Activated CD8-positive, alpha-beta T cell treated with anti-CD3 and anti-CD28 coated beads, Interleukin-2, amount 10 ng/mL, durations not matched to agents 7 days and 5 days (primary cell): ENCODE measurements at regions of chr17 and their contacts with region 1.

Region 1: GRCh38 chr17:8965394-8966168 is at the start of gene PIK3R5:
- DNase-seq: peak; percentile 86
- ATAC-seq: peak; percentile 81
- H3K4me3 Mint-ChIP-seq: peak within 1 kb of the TSS; percentile 99
- H3K27ac Mint-ChIP-seq: peak within 1 kb of the TSS; percentile 97
- H3K4me1 Mint-ChIP-seq: peaks cover 60% of the 10 kb centered on the region
- H3K27me3 Mint-ChIP-seq: no peaks in the 10 kb centered on the region
- total RNA-seq, gene PIK3R5: 73.9 to 77.9 TPM

Region 2: DNA sequence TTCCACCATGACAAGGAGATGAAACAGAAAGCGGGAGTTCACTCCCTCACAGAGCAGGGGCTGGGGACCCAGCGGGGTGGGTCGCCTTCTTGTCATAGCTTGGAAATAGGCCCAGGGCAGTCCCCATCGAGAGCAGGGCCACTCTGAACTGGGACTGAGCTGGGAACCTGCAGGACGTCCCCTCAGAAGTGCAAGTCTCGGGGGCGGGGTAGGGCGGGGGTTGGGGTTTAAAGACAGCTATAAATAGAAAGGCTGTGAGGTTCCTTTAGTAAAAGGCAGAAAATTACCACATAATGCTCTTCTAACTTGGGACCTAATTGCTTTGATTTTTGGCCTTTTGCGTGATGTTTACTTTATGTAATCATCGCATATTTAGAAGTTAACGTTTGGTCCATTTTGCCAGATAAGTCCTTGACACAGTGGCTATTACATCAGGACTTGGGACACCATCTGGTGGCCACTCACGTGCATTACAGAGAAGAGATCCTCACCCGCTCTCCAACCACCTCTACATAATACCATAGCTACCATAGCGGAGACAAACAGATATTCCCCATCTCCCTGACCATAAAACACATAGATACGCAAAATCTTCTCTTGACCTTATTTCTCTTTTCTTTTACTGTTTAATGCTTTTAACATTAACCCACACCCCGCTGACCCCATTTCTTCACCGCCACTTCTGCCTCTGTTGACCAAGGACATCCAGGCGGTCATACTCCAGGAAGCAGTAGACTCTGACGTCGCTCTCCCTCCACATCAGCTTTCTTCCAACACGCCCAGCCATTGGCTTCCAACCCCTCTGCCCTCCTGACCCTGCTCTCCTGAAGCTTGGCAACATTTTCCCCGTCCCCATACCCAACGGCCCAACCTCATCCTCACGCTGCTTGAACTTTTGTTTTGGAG is 70.7 kb before region 1 on chr17:
- CTCF ChIA-PET with region 1: interaction called, 22 read pairs
- POLR2A ChIA-PET with region 1: interaction called, 28 read pairs
- DNase-seq: peak; percentile 75
- ATAC-seq: no peak
- H3K4me3 Mint-ChIP-seq: no peak overlapping the region
- H3K27ac Mint-ChIP-seq: peak overlapping the region; percentile 26
- H3K4me1 Mint-ChIP-seq: peaks cover 71% of the 10 kb centered on the region
- H3K27me3 Mint-ChIP-seq: no peaks in the 10 kb centered on the region

Region 3: DNA sequence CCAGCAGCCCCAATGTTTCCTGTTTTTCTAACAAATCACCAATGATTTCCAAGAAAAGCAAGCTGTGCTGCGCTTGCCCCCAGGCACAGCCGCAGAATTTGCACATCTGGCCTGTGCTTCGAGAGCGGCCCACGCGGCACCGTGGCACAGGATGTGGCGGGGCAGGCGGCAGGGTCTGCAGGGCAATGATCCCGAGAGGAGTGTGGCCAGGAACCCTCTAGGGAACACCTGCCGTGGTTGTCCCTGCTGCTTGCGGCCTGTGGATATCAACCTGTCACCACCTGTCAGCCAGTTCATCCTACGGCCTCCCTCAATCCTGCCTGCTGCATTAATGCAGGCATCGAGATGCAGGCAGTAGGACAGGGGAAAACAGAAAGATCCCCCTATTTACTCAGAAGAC is 24.1 kb before region 1 on chr17:
- CTCF ChIA-PET with region 1: interaction called, 7 read pairs
- POLR2A ChIA-PET with region 1: interaction called, 28 read pairs
- DNase-seq: peak; percentile 83
- ATAC-seq: peak; percentile 79
- H3K4me3 Mint-ChIP-seq: peak overlapping the region; percentile 63
- H3K27ac Mint-ChIP-seq: peak overlapping the region; percentile 89
- H3K4me1 Mint-ChIP-seq: peaks cover 90% of the 10 kb centered on the region
- H3K27me3 Mint-ChIP-seq: no peaks in the 10 kb centered on the region

Region 4: GRCh38 chr17:8949061-8949661 is 16.4 kb before region 1 on chr17:
- CTCF ChIA-PET with region 1: interaction called, 28 read pairs
- POLR2A ChIA-PET with region 1: interaction called, 29 read pairs
- DNase-seq: no peak
- ATAC-seq: peak; percentile 52
- H3K4me3 Mint-ChIP-seq: peak overlapping the region; percentile 22
- H3K27ac Mint-ChIP-seq: peak overlapping the region; percentile 64
- H3K4me1 Mint-ChIP-seq: peaks cover 93% of the 10 kb centered on the region
- H3K27me3 Mint-ChIP-seq: no peaks in the 10 kb centered on the region

Region 5: GRCh38 chr17:8954339-8954738 is 11.2 kb before region 1 on chr17:
- CTCF ChIA-PET with region 1: interaction called, 28 read pairs
- POLR2A ChIA-PET with region 1: interaction called, 29 read pairs
- DNase-seq: peak; percentile 82
- ATAC-seq: peak; percentile 86
- H3K4me3 Mint-ChIP-seq: peak overlapping the region; percentile 53
- H3K27ac Mint-ChIP-seq: peak overlapping the region; percentile 87
- H3K4me1 Mint-ChIP-seq: peaks cover 96% of the 10 kb centered on the region
- H3K27me3 Mint-ChIP-seq: no peaks in the 10 kb centered on the region